ENCODE measurements at regions of chr2 and their contacts with region 1.

Region 1: DNA sequence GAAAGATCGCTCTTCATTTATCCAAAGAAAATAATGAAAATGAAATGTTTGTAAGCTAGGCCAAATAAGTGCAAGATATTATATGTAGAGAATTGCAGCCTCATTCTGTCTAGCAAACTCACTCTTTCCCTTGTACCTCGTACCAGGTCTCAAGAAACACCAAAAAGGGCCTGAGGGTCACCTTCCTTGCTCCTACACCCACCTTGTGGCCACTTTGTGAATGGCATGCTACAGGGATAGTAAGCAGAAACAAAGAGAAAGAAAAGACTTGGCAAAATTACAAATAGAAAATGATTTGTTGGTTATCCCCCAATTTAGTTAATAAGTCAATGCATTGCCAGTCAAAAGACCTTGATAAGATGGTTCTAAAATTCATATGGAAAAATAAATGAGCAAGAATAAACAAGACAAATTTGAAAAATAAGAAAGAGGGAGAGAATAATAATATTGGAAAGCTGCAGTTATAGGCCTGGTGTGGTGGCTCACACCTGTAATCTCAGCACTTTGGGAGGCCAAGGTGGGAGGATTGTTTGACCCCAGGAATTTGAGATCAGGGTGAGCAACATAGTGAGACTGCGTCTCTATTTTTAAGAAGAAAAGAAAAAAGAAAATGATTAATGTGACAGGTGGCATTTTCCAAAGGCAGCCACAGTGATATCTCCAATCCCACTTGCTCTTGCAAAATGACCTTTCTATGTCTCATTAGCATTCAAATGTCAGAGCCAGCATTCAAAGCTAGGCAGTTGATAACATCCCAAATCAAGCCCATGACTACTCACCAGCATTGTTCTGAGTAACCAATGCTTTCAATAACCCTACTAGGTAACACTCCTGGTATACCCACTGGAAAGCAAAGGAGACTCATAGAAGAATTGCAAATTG is 38.8 kb upstream of the BMP10 start:
- DNase-seq: peak; percentile 92
- H3K4me3 Mint-ChIP-seq: no peak overlapping the region
- H3K27ac Mint-ChIP-seq: peak overlapping the region; percentile 68
- H3K4me1 Mint-ChIP-seq: peaks cover 34% of the 10 kb centered on the region
- H3K27me3 Mint-ChIP-seq: no peaks in the 10 kb centered on the region

Region 2: DNA sequence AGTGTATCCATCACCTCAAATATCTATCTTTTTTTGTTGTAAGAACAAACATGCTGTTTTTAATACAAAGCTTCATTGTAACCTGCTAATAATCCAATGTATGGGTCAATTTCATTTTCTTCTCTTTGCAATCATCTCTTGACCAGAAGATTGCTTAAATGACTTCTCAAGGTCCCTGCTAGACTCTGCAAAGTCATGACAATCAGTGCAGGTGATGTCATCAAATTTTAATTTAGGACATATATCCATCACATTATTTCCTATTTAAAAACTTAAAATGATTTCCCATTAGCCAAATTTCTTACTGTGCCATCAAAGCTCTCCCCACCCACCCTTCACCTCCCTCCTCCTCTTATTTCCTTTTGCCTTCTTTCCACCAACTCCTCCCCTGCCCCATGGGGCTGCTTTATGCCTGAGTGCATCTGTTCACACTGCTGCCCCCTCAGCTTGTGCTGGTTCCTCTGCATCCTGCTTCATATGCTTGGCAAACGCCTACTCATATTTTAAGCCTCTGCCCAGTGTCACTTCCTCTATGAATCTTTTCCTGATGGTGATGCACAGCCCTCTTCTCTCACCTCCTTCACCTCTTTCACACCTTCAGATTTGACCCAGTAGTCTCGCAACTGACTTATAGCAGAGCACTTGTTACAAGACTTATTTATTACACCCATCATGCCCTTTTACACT is 524.7 kb before region 1 on chr2:
- CTCF ChIA-PET with region 1: no interaction called
- intact Hi-C with region 1: loop called (anchors 1 kb)
- DNase-seq: peak; percentile 72
- H3K4me3 Mint-ChIP-seq: no peak overlapping the region
- H3K27ac Mint-ChIP-seq: peak overlapping the region; percentile 9
- H3K4me1 Mint-ChIP-seq: peaks cover 40% of the 10 kb centered on the region
- H3K27me3 Mint-ChIP-seq: peaks cover 5% of the 10 kb centered on the region

Region 3: DNA sequence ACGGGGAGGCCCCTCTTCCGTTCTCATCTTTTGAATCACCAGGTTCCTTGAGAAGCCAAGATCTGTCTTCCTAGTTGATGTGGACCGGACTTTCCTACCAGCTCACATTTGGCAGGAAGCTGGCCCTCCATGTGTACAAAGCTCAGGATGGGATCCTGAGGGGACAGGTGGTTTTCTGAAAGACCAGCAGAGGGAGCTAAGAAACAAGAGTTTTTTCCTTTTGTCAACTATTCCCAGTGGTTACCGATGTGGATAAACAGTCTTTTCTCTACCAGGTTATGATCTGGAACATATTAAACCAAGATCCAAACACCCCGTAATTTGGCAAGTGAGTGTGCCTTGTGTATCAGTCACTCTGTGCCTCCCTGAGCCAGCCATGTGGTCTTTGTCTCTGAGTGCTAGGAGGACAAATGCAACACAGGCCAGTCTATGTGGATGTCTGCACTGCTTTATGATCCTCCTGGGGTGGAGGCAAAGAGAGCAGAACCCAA is 200.6 kb before region 1 on chr2:
- CTCF ChIA-PET with region 1: interaction called, 61 read pairs
- intact Hi-C with region 1: loop called (anchors 1 kb)
- DNase-seq: peak; percentile 34
- H3K4me3 Mint-ChIP-seq: no peak overlapping the region
- H3K27ac Mint-ChIP-seq: no peak overlapping the region
- H3K4me1 Mint-ChIP-seq: peaks cover 20% of the 10 kb centered on the region
- H3K27me3 Mint-ChIP-seq: no peaks in the 10 kb centered on the region

Region 4: DNA sequence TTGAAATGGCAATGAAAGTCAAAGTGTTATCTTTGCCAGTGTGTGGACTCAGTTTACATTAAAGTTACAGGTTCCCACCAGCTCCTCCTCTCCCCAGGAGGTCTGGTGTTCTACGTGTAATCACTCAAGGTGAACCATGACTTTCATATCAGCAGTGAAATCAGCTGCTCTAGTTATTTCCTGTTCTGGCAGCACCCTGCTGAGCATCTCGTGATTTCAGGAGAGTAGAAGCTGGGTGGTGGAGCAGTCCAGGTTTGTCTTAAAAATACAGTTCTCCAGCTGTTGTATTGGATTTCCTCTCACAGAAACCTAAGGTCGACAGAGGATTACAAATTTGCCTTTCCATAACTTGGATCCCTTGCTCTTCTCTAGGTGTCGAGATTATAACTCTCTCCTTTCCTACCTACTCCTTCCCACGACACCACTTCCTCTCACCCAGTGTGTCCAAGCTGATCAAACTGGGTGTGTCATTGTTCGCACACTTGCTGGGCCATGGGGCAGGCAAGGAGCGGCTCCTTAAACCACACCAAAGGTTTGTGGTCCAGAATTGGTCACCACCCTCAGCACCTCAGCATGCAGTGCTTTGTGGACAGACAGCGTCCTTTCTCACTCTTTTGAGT is 188.4 kb before region 1 on chr2:
- CTCF ChIA-PET with region 1: interaction called, 23 read pairs
- intact Hi-C with region 1: loop called (anchors 1 kb)
- DNase-seq: peak; percentile 62
- H3K4me3 Mint-ChIP-seq: peak overlapping the region; percentile 52
- H3K27ac Mint-ChIP-seq: peak overlapping the region; percentile 87
- H3K4me1 Mint-ChIP-seq: peaks cover 82% of the 10 kb centered on the region
- H3K27me3 Mint-ChIP-seq: no peaks in the 10 kb centered on the region

Region 5: GRCh38 chr2:68751397-68752339 is 158.4 kb before region 1 on chr2:
- CTCF ChIA-PET with region 1: interaction called, 34 read pairs
- intact Hi-C with region 1: loop called (anchors 1 kb)
- DNase-seq: peak; percentile 98
- H3K4me3 Mint-ChIP-seq: peak overlapping the region; percentile 28
- H3K27ac Mint-ChIP-seq: peak overlapping the region; percentile 93
- H3K4me1 Mint-ChIP-seq: peaks cover 87% of the 10 kb centered on the region
- H3K27me3 Mint-ChIP-seq: no peaks in the 10 kb centered on the region

Region 6: GRCh38 chr2:68837164-68837860 is 72.7 kb before region 1 on chr2:
- CTCF ChIA-PET with region 1: interaction called, 16 read pairs
- intact Hi-C with region 1: loop called (anchors 1 kb)
- DNase-seq: peak; percentile 85
- H3K4me3 Mint-ChIP-seq: no peak overlapping the region
- H3K27ac Mint-ChIP-seq: peak overlapping the region; percentile 61
- H3K4me1 Mint-ChIP-seq: peaks cover 34% of the 10 kb centered on the region
- H3K27me3 Mint-ChIP-seq: no peaks in the 10 kb centered on the region

Region 7: DNA sequence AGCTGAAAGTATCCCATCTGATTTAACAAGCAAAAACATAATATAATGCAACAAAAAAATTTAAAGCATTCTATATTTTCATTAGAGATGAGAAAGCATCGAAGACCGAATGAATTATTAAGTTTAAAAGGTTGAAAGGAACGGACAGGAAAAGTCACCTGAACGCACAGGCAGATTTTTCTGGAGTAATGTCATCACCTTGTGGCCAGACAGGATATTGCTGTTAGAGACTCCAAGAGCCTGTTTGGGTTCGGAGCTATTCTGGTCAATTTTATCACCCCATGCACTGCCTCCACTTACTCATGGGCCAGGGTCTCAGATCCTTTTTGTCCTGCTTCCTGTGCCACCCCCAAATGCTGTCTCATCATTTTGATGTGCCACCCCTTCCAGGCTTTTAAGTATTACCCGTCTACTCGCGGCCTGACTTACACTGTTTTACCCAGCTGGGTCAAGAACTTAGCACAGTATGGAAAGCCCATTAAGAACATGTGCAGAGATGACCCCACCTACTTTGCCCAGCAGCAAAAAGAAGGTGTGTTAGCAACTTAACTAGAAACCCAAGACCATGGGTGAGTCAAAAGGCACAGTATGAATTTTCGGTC is 15.4 kb after region 1 on chr2:
- CTCF ChIA-PET with region 1: interaction called, 28 read pairs
- intact Hi-C with region 1: no loop called
- DNase-seq: peak; percentile 76
- H3K4me3 Mint-ChIP-seq: no peak overlapping the region
- H3K27ac Mint-ChIP-seq: no peak overlapping the region
- H3K4me1 Mint-ChIP-seq: no peaks in the 10 kb centered on the region
- H3K27me3 Mint-ChIP-seq: peaks cover 4% of the 10 kb centered on the region

Measured in activated naive CD4-positive, alpha-beta T cell treated with anti-CD3 and anti-CD28 coated beads for 36 hours (primary cell).